Natural killer cell (primary cell): ENCODE measurements at regions of chr5 and their contacts with region 1.

Region 1: GRCh38 chr5:108345541-108346171 is 36.2 kb downstream of the FBXL17 start:
- DNase-seq: peak in 1 of 2 donors; percentile 65
- ATAC-seq: peak in 2 of 3 donors; percentile 69 to 70
- H3K4me3 ChIP-seq: no peak overlapping the region
- H3K4me3 Mint-ChIP-seq: no peak overlapping the region
- H3K27ac ChIP-seq: no peak overlapping the region
- H3K27ac Mint-ChIP-seq: no peak overlapping the region
- H3K4me1 ChIP-seq: no peaks in the 10 kb centered on the region
- H3K4me1 Mint-ChIP-seq: no peaks in the 10 kb centered on the region
- H3K27me3 ChIP-seq: no peaks in the 10 kb centered on the region
- H3K27me3 Mint-ChIP-seq: no peaks in the 10 kb centered on the region
- CTCF ChIP-seq: peak; percentile 79

Region 2: DNA sequence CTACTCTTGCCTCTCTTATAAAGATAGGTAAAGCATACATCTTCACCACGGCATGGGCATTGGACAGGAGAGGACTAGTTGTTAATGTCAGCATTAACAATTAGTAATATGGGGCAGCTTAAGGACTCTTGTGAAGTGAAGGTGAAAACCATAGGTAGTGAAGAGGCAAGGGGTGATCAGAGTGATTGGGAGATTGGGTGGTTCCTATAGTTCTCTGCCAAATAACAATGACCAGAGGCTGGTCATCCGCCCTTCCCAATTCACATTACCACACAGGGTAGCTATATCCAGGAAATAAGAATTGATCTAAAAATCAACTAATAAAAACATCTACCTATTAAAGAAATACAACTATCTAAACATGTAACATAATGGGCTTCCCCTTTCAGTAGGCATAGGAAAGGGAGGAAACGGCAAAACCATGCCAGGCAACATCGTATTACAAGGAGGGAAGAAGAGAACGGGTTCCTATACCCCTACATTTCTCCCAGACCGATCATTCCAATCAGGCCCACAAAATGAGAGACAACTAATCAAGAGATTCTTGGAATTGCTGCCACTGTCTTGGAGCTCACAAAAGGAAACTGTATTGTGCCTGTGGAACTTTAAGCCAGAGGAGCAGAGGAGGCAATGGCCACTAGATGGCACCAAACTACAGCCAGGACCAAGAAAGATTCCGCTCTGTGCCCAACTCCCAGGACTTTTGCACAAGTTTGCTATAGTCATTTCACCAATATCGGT is 85.4 kb before region 1 on chr5:
- intact Hi-C with region 1: loop called (anchors 1 kb)
- DNase-seq: peak; percentile 39 to 84
- ATAC-seq: peak; percentile 83 to 93 (median 86)
- H3K4me3 ChIP-seq: no peak overlapping the region
- H3K4me3 Mint-ChIP-seq: no peak overlapping the region
- H3K27ac ChIP-seq: no peak overlapping the region
- H3K27ac Mint-ChIP-seq: no peak overlapping the region
- H3K4me1 ChIP-seq: no peaks in the 10 kb centered on the region
- H3K4me1 Mint-ChIP-seq: peaks cover 8 to 11% of the 10 kb centered on the region in 2 donors
- H3K27me3 ChIP-seq: no peaks in the 10 kb centered on the region
- H3K27me3 Mint-ChIP-seq: no peaks in the 10 kb centered on the region
- CTCF ChIP-seq: peak; percentile 99